ENCODE measurements at regions of chr16 and their contacts with region 1.

Region 1: DNA sequence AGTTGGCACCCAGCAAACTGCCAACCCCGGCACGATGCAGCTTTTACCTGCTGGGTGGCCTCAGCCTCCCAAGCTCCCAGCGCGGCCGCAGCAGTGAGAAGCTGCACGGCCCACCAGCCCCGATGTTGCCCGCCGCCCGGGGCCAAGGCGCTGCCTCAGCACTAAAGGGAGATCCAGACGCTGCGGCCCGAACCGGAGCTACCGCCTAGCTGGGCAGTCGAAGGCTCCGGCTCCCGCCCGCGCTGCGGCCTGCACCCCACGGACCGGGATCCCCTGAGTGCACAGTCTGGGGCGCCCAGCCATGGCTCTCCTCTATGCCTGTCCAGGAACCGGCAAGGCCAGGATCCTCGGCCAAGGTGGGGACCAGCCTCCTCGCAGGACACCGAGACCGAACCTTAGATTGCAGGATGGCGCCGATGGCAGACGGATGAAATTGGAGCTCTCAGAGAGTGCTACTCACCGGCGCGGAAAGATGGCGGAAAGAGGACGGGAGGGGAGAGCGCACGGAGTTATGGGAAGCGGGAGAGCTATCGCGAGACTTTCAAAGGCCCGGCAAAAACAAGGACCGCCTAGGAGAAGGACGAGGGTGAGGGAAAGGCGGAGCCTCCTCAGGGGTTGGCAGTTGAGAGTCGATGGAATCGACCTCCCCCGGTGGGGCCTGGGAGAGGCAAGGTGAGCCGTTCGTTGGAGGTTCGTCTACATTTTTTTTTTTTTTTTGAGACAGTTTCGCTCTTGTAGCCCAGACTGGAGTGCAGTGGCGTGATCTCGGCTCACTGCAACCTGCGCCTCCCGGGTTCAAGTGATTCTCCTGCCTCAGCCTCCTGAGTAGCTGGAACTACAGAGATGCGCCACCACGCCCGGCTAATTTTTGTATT is at the start of gene RPS15A:
- DNase-seq: peak; percentile 88 to 94
- H3K4me3 ChIP-seq: peak within 1 kb of the TSS; percentile 92 to 99 (median 97)
- H3K27ac ChIP-seq: peak within 1 kb of the TSS; percentile 97
- H3K4me1 ChIP-seq: peaks cover 0 to 5% (median 4%) of the 10 kb centered on the region in 4 experiments; a peak in 6 of 7 replicates
- H3K27me3 ChIP-seq: no peaks in the 10 kb centered on the region
- CTCF ChIP-seq: no peak
- EP300 ChIP-seq: no peak
- POLR2A ChIP-seq: peak; percentile 97
- RAD21 ChIP-seq: no peak
- total RNA-seq, gene RPS15A: 1,784 TPM in 2 replicates

Region 2: GRCh38 chr16:18582902-18583301 is 207.2 kb before region 1 on chr16:
- CTCF ChIA-PET with region 1: no interaction called
- POLR2A ChIA-PET with region 1: no interaction called
- DNase-seq: no peak
- H3K4me3 ChIP-seq: no peak overlapping the region
- H3K27ac ChIP-seq: no peak overlapping the region
- H3K4me1 ChIP-seq: no peaks in the 10 kb centered on the region
- H3K27me3 ChIP-seq: no peaks in the 10 kb centered on the region
- CTCF ChIP-seq: no peak
- EP300 ChIP-seq: no peak
- POLR2A ChIP-seq: no peak
- RAD21 ChIP-seq: no peak

Region 3: DNA sequence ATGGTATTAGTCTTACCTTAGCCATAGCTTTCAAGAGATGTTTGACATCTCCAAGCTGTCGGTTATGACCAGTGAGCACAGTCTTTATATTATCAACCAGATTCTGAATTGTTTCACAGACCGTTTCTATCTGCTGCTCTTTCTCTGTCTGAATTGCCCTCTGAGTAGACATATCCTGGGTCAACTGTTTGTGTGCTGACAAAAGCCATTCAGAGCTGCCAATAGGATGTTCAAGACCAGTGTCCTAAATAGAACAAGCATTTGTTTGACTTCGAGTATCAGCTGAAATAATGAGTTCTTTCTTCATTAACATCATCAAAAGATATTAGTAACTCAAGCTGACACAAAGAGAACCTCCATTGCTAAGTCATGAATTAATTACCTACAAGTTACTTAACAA is 26.2 kb after region 1 on chr16:
- CTCF ChIA-PET with region 1: no interaction called
- POLR2A ChIA-PET with region 1: interaction called, 503 read pairs
- DNase-seq: no peak
- H3K4me3 ChIP-seq: no peak overlapping the region
- H3K27ac ChIP-seq: no peak overlapping the region
- H3K4me1 ChIP-seq: no peaks in the 10 kb centered on the region
- H3K27me3 ChIP-seq: no peaks in the 10 kb centered on the region
- CTCF ChIP-seq: no peak
- EP300 ChIP-seq: no peak
- POLR2A ChIP-seq: no peak
- RAD21 ChIP-seq: no peak

Region 4: DNA sequence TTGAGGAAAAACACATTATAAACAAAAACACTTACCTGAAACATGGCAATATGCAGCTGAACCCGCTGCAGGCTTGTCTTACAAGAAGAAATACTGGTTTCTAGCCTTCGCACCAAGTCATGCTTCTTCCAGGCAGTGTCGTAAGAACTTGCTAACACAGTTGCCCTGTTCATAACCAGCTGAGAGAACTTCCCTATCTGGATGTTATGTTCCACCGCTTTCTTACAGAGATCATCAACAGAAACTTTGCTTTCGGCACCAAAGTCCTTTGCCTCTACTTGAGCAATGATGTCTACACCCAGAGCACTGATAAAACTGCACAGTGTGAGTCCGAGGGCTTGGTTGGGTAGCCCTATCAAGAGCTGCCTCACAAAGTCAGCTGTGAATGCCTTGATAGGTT is 39.2 kb after region 1 on chr16:
- CTCF ChIA-PET with region 1: no interaction called
- POLR2A ChIA-PET with region 1: interaction called, 13 read pairs
- DNase-seq: no peak
- H3K4me3 ChIP-seq: no peak overlapping the region
- H3K27ac ChIP-seq: no peak overlapping the region
- H3K4me1 ChIP-seq: no peaks in the 10 kb centered on the region
- H3K27me3 ChIP-seq: no peaks in the 10 kb centered on the region
- CTCF ChIP-seq: no peak
- EP300 ChIP-seq: no peak
- POLR2A ChIP-seq: no peak
- RAD21 ChIP-seq: no peak

Region 5: DNA sequence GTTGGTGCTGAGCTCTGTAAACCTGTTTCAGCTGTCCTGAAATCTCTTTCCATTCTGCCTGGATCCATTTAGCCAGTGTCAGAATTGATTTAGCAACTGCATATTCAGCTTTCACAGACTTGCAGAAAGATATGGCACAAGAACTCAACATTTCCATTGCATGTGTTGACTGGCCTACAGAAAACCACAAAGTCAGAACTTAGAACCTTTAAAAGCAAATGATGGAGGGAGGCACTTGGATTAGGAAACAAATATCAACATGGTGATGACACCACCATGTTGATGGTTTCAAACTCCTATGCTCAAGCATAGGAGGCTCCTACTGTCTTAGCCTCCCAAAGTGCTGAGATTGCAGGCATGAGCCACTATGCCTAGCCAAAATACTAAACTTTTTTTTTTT is 63.6 kb after region 1 on chr16:
- CTCF ChIA-PET with region 1: no interaction called
- POLR2A ChIA-PET with region 1: no interaction called
- DNase-seq: no peak
- H3K4me3 ChIP-seq: no peak overlapping the region
- H3K27ac ChIP-seq: no peak overlapping the region
- H3K4me1 ChIP-seq: no peaks in the 10 kb centered on the region
- H3K27me3 ChIP-seq: no peaks in the 10 kb centered on the region
- CTCF ChIP-seq: no peak
- EP300 ChIP-seq: no peak
- POLR2A ChIP-seq: no peak
- RAD21 ChIP-seq: no peak

Region 6: GRCh38 chr16:19086322-19087199 is 296.5 kb after region 1 on chr16:
- CTCF ChIA-PET with region 1: no interaction called
- POLR2A ChIA-PET with region 1: no interaction called
- DNase-seq: peak; percentile 58 to 96
- H3K4me3 ChIP-seq: peak overlapping the region in 3 of 4 experiments; percentile 28 to 53 (median 42); a peak in 5 of 8 replicates
- H3K27ac ChIP-seq: no peak overlapping the region
- H3K4me1 ChIP-seq: no peaks in the 10 kb centered on the region; a peak in 1 of 7 replicates
- H3K27me3 ChIP-seq: peaks cover 0 to 10% (median 7%) of the 10 kb centered on the region in 4 experiments; a peak in 5 of 7 replicates
- CTCF ChIP-seq: peak; percentile 79 to 96 (median 88)
- EP300 ChIP-seq: no peak
- POLR2A ChIP-seq: no peak
- RAD21 ChIP-seq: peak; percentile 93 to 98